A673 (cell line): ENCODE measurements at regions of chr20 and their contacts with region 1.

Region 1: DNA sequence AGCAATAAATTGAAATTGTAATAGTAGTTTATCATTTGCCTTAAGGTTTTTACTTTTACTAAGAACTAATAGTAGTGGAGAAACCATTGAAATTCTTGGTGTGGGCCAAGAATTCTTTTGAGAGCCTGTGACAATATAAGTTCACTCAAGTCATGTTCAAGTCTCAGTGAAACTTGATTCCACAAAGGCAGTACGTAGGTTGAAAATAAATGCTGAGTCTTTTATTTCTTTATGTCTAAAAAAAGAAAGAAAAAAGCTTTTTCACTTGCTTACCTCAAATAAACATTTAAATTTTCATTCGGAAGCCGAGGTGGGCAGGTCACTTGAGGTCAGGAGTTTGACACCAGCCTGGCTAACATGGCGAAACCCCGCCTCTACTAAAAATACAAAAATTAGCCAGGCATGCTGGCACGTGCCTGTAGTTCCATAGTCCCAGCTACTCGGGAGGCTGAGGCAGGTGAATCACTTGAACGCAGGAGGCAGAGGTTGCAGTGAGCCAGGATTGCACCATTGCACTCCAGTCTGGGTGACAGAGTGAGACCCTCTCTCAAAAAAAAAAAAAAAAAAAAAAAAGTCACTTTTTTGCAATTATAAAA is 57.8 kb upstream of the NELFCD start:
- DNase-seq: no peak
- H3K4me3 ChIP-seq: no peak overlapping the region
- H3K27ac ChIP-seq: no peak overlapping the region
- H3K4me1 ChIP-seq: no peaks in the 10 kb centered on the region
- H3K27me3 ChIP-seq: no peaks in the 10 kb centered on the region
- CTCF ChIP-seq: no peak

Region 2: DNA sequence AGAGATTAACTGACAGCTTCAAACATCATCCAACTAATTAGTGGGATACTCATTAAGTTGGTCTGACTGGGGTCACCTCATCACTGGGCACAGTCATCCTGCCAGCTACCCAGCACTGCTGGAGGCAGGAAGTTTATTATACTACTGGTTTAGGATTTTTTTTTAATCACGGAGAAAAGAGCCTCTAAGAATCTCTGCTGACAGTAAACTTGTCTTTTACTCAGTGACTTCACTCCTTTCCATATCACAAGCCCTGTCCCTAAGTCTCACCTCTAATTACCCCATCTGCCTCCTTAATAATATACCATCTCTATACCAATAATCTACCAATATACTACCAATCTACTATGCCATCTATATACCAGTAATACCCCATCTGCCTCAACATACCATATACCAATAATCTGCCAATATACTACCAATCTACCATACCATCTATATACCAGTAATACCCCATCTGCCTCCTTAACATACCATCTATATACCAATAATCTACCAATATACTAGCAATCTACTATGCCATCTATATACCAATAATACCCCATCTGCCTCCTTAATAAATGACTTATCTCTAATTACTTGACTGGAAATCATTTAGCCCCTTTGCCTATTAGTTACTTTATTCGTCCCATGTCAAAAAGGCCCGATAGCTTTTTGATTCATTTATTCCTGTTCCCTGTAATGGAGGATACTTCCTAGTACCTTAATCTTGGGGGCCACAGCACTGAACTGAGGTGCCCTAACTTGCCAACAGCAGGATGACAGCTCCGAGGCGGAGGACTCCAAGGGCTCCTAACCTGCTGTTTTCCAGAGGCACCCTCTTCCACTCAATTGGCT is 103.9 kb after region 1 on chr20:
- CTCF ChIA-PET with region 1: no interaction called
- POLR2A ChIA-PET with region 1: interaction called, 11 read pairs
- intact Hi-C with region 1: no loop called
- DNase-seq: no peak
- H3K4me3 ChIP-seq: no peak overlapping the region
- H3K27ac ChIP-seq: no peak overlapping the region
- H3K4me1 ChIP-seq: peaks cover 28% of the 10 kb centered on the region
- H3K27me3 ChIP-seq: no peaks in the 10 kb centered on the region
- CTCF ChIP-seq: no peak